CD4-positive, alpha-beta T cell (primary cell): ENCODE measurements at regions of chr19 and their contacts with region 1.

Region 1: DNA sequence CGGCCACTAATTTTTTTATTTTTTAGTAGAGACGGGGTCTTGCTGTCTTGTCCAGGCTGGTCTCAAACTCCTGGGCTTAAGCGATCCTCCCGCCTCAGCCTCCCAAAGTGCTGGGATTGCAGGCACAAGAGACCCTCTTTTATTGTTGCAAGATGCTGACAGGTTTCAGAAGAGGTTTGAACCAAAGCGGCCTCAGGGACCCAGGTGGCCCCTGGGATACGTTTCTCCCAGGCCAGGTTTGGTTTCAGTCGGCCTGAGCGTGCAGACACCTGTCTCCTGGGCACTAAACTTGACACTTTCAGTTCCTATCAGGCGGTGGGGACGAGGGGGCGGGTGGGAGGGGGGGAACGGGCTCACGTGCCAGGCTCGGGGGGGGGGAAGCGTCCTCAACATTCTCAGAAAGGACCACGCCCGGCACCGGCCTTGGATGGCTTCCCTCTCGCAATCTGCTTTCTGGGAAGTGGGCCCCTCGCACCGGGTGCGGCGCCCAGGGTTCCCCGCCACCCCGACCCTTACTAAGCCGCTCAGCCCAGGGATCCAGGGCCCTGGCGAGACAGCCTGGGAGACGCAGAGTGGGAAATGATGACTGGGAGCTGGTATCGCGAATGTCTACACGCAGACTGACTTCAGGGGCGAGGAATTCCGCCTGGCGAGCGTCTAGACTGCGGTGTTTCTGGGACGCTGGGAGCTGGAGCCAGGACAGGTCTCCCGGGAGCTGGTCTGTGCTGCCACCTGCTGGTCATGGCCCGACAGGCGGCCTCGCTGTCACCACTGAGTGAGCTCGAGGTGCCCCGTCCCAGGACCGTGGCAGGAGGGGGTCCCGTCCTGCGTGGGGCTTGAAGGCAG is 91.6 kb downstream of the GNG7 start:
- DNase-seq: peak; percentile 81 to 95 (median 87)
- ATAC-seq: peak; percentile 45
- H3K4me3 ChIP-seq: peak overlapping the region; percentile 59
- H3K4me3 Mint-ChIP-seq: peak overlapping the region; percentile 83
- H3K27ac ChIP-seq: no peak overlapping the region
- H3K27ac Mint-ChIP-seq: peak overlapping the region; percentile 30
- H3K4me1 ChIP-seq: peaks cover 44% of the 10 kb centered on the region
- H3K4me1 Mint-ChIP-seq: peaks cover 44% of the 10 kb centered on the region
- H3K27me3 ChIP-seq: no peaks in the 10 kb centered on the region
- H3K27me3 Mint-ChIP-seq: peaks cover 4% of the 10 kb centered on the region
- CTCF ChIP-seq: peak; percentile 98

Region 2: GRCh38 chr19:2151339-2152229 is 459.3 kb before region 1 on chr19 and contains the start of gene AP3D1:
- CTCF ChIA-PET with region 1: no interaction called
- POLR2A ChIA-PET with region 1: no interaction called
- intact Hi-C with region 1: loop called in 1 of 2 experiments (anchors 5 kb)
- DNase-seq: peak; percentile 100
- ATAC-seq: peak; percentile 87
- H3K4me3 ChIP-seq: peak within 1 kb of the TSS; percentile 80
- H3K4me3 Mint-ChIP-seq: peak within 1 kb of the TSS; percentile 93
- H3K27ac ChIP-seq: peak within 1 kb of the TSS; percentile 77 to 92
- H3K27ac Mint-ChIP-seq: peak within 1 kb of the TSS; percentile 90
- H3K4me1 ChIP-seq: peaks cover 50% of the 10 kb centered on the region
- H3K4me1 Mint-ChIP-seq: peaks cover 31% of the 10 kb centered on the region
- H3K27me3 ChIP-seq: no peaks in the 10 kb centered on the region
- H3K27me3 Mint-ChIP-seq: no peaks in the 10 kb centered on the region
- CTCF ChIP-seq: no peak
- total RNA-seq, gene AP3D1: 41.8 to 41.9 TPM

Region 3: DNA sequence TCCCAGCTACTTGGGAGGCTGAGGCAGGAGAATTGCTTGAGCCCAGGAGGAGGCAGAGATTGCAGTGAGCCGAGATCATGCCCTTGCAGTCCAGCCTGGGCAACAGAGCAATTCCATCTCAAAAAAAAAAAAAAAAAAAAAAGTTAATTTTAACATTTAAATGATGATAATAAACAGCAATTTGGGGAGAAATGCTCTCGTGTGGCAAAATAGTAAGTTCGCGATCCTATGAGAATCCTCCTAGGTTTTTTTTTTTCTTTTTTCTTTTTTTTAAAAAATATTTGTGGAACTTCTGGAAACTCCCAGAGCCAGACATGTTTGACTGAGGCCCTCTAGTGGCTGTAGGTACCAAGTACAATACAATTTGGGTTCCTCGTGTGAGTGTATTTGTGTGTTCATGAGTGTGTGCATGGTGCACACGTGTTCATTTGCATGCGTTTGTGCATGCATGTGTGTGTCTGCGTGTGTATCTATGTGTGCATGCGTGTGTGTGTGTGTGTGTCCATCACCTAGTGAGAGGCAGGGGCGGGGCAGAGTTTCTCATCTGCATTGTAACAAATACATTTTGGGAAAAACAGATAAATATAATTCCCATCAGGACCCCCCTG is 219.6 kb before region 1 on chr19:
- CTCF ChIA-PET with region 1: no interaction called
- POLR2A ChIA-PET with region 1: no interaction called
- intact Hi-C with region 1: loop called in 1 of 2 experiments (anchors 1 kb)
- DNase-seq: peak in 12 of 14 experiments; percentile 6 to 83 (median 23)
- ATAC-seq: peak; percentile 85
- H3K4me3 ChIP-seq: no peak overlapping the region
- H3K4me3 Mint-ChIP-seq: no peak overlapping the region
- H3K27ac ChIP-seq: no peak overlapping the region
- H3K27ac Mint-ChIP-seq: no peak overlapping the region
- H3K4me1 ChIP-seq: peaks cover 12% of the 10 kb centered on the region
- H3K4me1 Mint-ChIP-seq: peaks cover 4% of the 10 kb centered on the region
- H3K27me3 ChIP-seq: no peaks in the 10 kb centered on the region
- H3K27me3 Mint-ChIP-seq: peaks cover 12% of the 10 kb centered on the region
- CTCF ChIP-seq: peak; percentile 81

Region 4: DNA sequence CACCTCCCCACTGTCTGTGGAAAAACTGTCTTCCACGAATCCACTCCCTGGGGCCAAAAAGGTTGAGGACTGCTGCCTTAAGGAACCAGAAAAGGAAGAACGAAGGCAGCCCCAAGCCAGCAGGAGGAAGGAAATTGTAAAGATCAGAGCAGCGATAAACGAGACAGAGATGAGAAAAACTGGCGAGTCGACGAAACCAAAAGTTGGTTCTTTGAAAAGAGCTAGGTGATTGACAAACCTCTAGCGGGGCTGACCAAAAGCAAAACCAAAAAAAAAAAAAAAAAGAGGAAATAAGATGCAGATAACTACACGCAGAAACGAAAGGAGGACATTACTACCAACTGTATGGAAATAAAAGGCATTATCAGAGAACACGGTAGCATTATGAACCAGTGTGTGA is 58.0 kb before region 1 on chr19:
- CTCF ChIA-PET with region 1: interaction called, 4 read pairs
- POLR2A ChIA-PET with region 1: interaction called, 4 read pairs
- intact Hi-C with region 1: loop called in 1 of 2 experiments (anchors 5 kb)
- DNase-seq: peak in 12 of 14 experiments; percentile 12 to 90 (median 37)
- ATAC-seq: peak; percentile 92
- H3K4me3 ChIP-seq: peak overlapping the region; percentile 19
- H3K4me3 Mint-ChIP-seq: peak overlapping the region; percentile 85
- H3K27ac ChIP-seq: peak overlapping the region; percentile 21 to 26
- H3K27ac Mint-ChIP-seq: peak overlapping the region; percentile 62
- H3K4me1 ChIP-seq: peaks cover 23% of the 10 kb centered on the region
- H3K4me1 Mint-ChIP-seq: peaks cover 13% of the 10 kb centered on the region
- H3K27me3 ChIP-seq: no peaks in the 10 kb centered on the region
- H3K27me3 Mint-ChIP-seq: no peaks in the 10 kb centered on the region
- CTCF ChIP-seq: no peak

Region 5: DNA sequence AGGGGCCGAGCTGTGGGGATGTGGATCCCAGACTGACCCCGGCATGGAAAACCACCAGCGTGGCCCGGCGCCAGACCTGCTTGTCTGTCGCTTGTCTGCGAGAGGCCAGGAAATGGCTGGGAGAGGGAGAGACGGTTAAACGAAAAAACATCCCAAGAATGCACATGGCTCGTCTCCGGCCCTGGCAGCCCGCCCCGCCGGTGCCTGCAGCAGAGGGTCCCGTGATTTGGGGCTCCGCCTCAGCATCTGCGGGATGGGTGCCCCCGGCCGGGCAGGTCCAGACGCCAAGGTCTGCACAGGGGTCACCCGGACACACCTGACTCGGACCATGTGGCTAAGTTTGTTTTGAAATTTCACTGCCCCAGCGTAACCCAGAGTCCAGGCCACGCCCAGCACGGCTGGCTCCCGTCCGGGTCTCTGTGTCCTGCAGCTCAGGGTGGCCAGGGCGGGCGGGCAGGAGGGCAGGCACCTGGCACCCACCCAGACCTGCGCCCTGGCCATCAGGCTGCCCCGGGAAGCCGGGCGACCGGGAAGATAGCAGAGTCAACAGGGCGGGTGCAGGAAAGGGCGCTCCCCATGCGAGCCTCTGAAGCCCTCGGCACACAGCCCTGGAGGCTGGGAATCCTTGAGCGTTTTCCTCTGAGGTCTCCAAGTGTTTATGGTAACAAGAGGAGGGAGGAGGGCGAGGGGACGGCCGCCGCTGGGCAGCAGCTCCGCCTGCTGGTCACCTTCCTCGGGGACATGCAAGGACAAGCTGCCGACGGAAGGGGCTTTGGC is 31.8 kb before region 1 on chr19:
- CTCF ChIA-PET with region 1: interaction called, 13 read pairs
- POLR2A ChIA-PET with region 1: interaction called, 3 read pairs
- intact Hi-C with region 1: loop called in 1 of 2 experiments (anchors 2 kb)
- DNase-seq: peak; percentile 29 to 80 (median 64)
- ATAC-seq: peak; percentile 46
- H3K4me3 ChIP-seq: peak overlapping the region; percentile 30
- H3K4me3 Mint-ChIP-seq: no peak overlapping the region
- H3K27ac ChIP-seq: no peak overlapping the region
- H3K27ac Mint-ChIP-seq: no peak overlapping the region
- H3K4me1 ChIP-seq: peaks cover 12% of the 10 kb centered on the region
- H3K4me1 Mint-ChIP-seq: no peaks in the 10 kb centered on the region
- H3K27me3 ChIP-seq: peaks cover 2 to 5% of the 10 kb centered on the region in 2 experiments
- H3K27me3 Mint-ChIP-seq: peaks cover 5% of the 10 kb centered on the region
- CTCF ChIP-seq: peak; percentile 70

Region 6: GRCh38 chr19:2636897-2637683 is 26.2 kb after region 1 on chr19:
- CTCF ChIA-PET with region 1: interaction called, 39 read pairs
- POLR2A ChIA-PET with region 1: interaction called, 6 read pairs
- intact Hi-C with region 1: loop called (anchors 1 to 2 kb)
- DNase-seq: peak; percentile 66 to 88 (median 73)
- ATAC-seq: peak; percentile 98
- H3K4me3 ChIP-seq: no peak overlapping the region
- H3K4me3 Mint-ChIP-seq: no peak overlapping the region
- H3K27ac ChIP-seq: no peak overlapping the region
- H3K27ac Mint-ChIP-seq: no peak overlapping the region
- H3K4me1 ChIP-seq: peaks cover 13% of the 10 kb centered on the region
- H3K4me1 Mint-ChIP-seq: peaks cover 13% of the 10 kb centered on the region
- H3K27me3 ChIP-seq: no peaks in the 10 kb centered on the region
- H3K27me3 Mint-ChIP-seq: no peaks in the 10 kb centered on the region
- CTCF ChIP-seq: peak; percentile 81